ENCODE measurements at regions of chr1 and their contacts with region 1.

Region 1: DNA sequence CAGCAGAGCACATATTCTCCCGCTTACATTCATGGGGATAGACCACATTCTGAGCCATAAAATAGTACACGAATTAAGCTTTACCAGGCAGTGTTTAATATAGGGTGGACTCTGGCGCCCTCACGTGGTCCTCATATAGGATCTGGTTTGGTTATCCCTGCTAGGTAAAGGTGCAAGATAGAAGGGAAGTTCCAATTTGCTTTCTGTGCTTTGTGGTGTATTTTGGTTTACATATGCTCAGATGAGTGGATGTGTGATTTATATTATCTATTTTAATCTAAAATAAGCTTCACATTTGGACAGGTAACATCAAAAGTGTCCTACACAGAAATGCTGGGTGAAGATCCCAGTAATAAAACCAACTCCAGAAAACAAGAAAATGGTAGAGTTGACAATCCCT is 3.6 kb downstream of the CR1 start:
- DNase-seq: peak; percentile 80
- H3K4me3 Mint-ChIP-seq: no peak overlapping the region
- H3K27ac Mint-ChIP-seq: no peak overlapping the region
- H3K4me1 Mint-ChIP-seq: peaks cover 22% of the 10 kb centered on the region
- H3K27me3 Mint-ChIP-seq: peaks cover 48% of the 10 kb centered on the region

Region 2: DNA sequence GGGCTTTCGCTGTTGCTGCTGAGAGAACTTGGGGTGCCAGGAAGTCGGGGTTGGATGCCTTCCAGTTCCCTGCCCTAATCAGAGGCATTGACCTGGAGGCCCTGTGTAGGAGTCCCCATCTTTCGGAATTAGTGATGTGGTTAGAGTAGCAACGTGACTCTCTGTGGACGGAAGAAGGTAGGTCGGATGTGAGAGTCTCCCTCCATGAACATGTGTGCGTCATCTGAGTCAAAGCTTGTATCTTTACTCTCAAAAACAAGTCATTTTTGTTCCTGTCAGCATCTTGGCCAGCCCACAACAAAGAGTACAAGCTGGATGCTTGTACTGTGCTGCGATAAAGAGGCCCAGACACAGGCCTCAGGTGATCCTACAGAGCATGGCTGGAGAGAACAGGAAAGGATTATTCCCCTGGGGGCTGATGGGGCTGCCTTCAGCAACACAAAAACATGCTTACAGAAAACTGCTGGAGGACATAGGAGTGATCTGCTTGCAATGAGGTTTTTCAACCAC is 696.3 kb before region 1 on chr1:
- CTCF ChIA-PET with region 1: no interaction called
- POLR2A ChIA-PET with region 1: no interaction called
- intact Hi-C with region 1: loop called (anchors 2 kb)
- DNase-seq: peak; percentile 89
- H3K4me3 Mint-ChIP-seq: peak overlapping the region; percentile 35
- H3K27ac Mint-ChIP-seq: peak overlapping the region; percentile 66
- H3K4me1 Mint-ChIP-seq: peaks cover 79% of the 10 kb centered on the region
- H3K27me3 Mint-ChIP-seq: peaks cover 13% of the 10 kb centered on the region

Region 3: GRCh38 chr1:207052911-207053769 is 446.4 kb before region 1 on chr1 and contains the start of gene PFKFB2:
- CTCF ChIA-PET with region 1: interaction called, 17 read pairs
- POLR2A ChIA-PET with region 1: interaction called, 5 read pairs
- intact Hi-C with region 1: loop called (anchors 1 kb)
- DNase-seq: peak; percentile 95
- H3K4me3 Mint-ChIP-seq: peak within 1 kb of the TSS; percentile 93
- H3K27ac Mint-ChIP-seq: peak within 1 kb of the TSS; percentile 67
- H3K4me1 Mint-ChIP-seq: peaks cover 33% of the 10 kb centered on the region
- H3K27me3 Mint-ChIP-seq: no peaks in the 10 kb centered on the region
- total RNA-seq, gene PFKFB2: 2.1 to 2.5 TPM

Region 4: GRCh38 chr1:207181838-207182237 is 317.7 kb before region 1 on chr1:
- CTCF ChIA-PET with region 1: interaction called, 3 read pairs
- POLR2A ChIA-PET with region 1: no interaction called
- intact Hi-C with region 1: loop called (anchors 2 kb)
- DNase-seq: no peak
- H3K4me3 Mint-ChIP-seq: no peak overlapping the region
- H3K27ac Mint-ChIP-seq: no peak overlapping the region
- H3K4me1 Mint-ChIP-seq: no peaks in the 10 kb centered on the region
- H3K27me3 Mint-ChIP-seq: peaks cover 13% of the 10 kb centered on the region

Region 5: GRCh38 chr1:207352554-207352953 is 147.0 kb before region 1 on chr1:
- CTCF ChIA-PET with region 1: no interaction called
- POLR2A ChIA-PET with region 1: no interaction called
- intact Hi-C with region 1: no loop called
- DNase-seq: no peak
- H3K4me3 Mint-ChIP-seq: no peak overlapping the region
- H3K27ac Mint-ChIP-seq: no peak overlapping the region
- H3K4me1 Mint-ChIP-seq: peaks cover 23% of the 10 kb centered on the region
- H3K27me3 Mint-ChIP-seq: no peaks in the 10 kb centered on the region

Region 6: DNA sequence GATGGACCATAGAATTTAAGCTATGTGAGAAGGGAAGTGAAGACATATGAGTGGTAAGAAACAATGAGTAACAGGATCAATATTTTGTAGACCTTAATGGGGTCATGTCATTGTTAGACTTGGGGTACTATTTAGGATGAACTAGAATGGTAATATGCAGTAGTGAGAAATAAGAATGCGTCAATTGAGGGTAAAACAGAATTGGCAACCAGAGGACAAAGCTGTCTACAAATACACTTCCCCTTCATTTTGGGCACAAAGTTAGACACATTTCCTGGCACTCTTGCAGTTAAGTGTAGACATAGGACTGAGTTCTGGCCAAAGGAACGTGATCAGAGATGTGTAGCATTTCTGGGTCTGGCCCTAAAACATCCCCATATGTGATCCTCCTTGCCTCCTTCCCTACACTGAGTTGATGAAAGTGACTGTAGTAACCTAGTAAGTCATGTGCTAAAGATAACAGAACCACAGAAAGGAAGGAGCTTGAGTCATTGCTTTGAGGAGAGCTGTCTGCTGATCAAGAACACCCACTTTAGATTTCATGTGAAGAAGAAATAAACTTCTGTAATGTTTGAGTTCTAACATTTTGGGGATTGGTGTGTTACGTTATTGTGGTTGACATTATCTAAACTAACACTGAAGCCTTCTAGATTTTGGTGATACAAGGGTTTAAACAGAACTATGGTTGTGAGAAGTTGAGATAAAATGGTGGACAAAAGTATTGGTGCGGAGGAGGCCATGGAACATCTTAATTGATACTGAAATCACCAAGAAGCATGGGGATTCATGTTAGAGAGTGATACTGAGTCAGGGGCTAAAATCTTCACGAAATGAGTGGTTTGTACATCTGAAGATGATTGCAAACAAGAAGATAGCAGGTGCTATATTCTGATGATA is 136.4 kb before region 1 on chr1:
- CTCF ChIA-PET with region 1: interaction called, 9 read pairs
- POLR2A ChIA-PET with region 1: no interaction called
- intact Hi-C with region 1: loop called (anchors 1 kb)
- DNase-seq: peak; percentile 18
- H3K4me3 Mint-ChIP-seq: no peak overlapping the region
- H3K27ac Mint-ChIP-seq: no peak overlapping the region
- H3K4me1 Mint-ChIP-seq: no peaks in the 10 kb centered on the region
- H3K27me3 Mint-ChIP-seq: no peaks in the 10 kb centered on the region

Region 7: GRCh38 chr1:207454046-207454964 is 45.3 kb before region 1 on chr1 and contains the start of gene CR2:
- CTCF ChIA-PET with region 1: interaction called, 16 read pairs
- POLR2A ChIA-PET with region 1: interaction called, 3 read pairs
- intact Hi-C with region 1: no loop called
- DNase-seq: peak; percentile 73
- H3K4me3 Mint-ChIP-seq: peak within 1 kb of the TSS; percentile 56
- H3K27ac Mint-ChIP-seq: no peak within 1 kb of the TSS
- H3K4me1 Mint-ChIP-seq: peaks cover 9% of the 10 kb centered on the region
- H3K27me3 Mint-ChIP-seq: peaks cover 31% of the 10 kb centered on the region
- total RNA-seq, gene CR2: 0.10 TPM in 1 of 2 experiments, not detected in the other